ENCODE measurements at regions of chr22 and their contacts with region 1.

Region 1: GRCh38 chr22:40128989-40129388 is 48.7 kb upstream of the TNRC6B start:
- DNase-seq: peak in 1 of 2 donors; percentile 30
- ATAC-seq: peak in 7 of 8 donors; percentile 20 to 88 (median 65)
- H3K4me3 ChIP-seq: no peak overlapping the region
- H3K27ac ChIP-seq: no peak overlapping the region
- H3K4me1 ChIP-seq: peaks cover 0 to 16% (median 4%) of the 10 kb centered on the region in 9 donors
- H3K27me3 ChIP-seq: no peaks in the 10 kb centered on the region
- CTCF ChIP-seq: no peak

Region 2: DNA sequence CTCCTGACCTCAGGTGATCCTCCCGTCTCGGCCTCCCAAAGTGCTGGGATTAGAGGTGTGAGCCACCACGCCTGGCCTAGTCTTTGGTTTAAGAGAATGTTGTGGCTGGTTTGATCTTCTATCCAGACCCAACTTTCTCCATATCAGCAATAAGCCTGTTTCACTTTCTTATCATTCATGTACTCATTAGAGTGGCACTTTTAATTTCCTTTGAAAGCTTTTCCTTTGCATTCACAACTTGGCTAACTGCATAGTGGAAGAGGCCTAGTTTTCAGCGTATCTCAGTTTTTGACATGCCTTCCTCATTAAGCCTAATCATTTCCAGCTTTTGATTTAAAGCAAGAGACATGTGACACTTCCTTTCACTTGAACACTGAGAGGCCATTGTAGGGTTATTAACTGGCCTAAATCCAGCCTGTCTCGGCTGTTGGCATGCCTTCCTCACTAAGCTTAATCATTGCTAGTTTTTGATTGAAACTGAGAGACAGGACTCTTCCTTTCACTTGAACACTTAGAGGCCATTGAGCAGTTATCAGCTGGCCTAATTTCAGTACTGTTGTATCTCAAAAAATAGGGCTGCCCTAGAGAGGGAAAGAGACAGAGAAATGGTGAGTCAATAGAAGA is 796.4 kb before region 1 on chr22:
- intact Hi-C with region 1: loop called in 1 of 10 experiments (anchors 5 kb)
- DNase-seq: no peak
- ATAC-seq: peak in 4 of 8 donors; percentile 31 to 56 (median 38)
- H3K4me3 ChIP-seq: no peak overlapping the region
- H3K27ac ChIP-seq: peak overlapping the region in 4 of 10 donors; percentile 7 to 64 (median 34)
- H3K4me1 ChIP-seq: peaks cover 0 to 31% (median 6%) of the 10 kb centered on the region in 9 donors
- H3K27me3 ChIP-seq: no peaks in the 10 kb centered on the region
- CTCF ChIP-seq: no peak

Region 3: DNA sequence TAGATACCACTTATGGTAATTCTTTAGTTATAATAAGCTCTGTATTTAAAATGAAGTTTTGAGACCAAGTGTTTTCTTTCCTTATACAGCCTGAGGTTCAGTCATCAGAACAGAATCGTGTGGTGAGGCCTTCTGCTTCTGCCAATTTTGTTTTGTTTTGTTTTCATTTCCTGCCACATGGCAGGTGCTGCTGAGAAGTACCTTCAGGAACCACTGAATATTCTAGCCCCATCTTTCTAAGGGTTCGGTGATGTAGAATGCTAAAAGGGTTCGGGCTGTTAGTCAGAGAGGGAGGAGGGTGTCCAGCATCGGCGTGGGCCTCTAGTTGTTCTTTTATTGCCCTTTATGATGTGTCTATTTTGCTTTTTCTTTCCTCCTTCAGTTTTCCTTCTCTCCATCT is 74.6 kb after region 1 on chr22:
- intact Hi-C with region 1: no loop called
- DNase-seq: no peak
- ATAC-seq: peak in 2 of 8 donors; percentile 6 to 12
- H3K4me3 ChIP-seq: no peak overlapping the region
- H3K27ac ChIP-seq: peak overlapping the region in 6 of 10 donors; percentile 27 to 75 (median 36)
- H3K4me1 ChIP-seq: peaks cover 0 to 88% (median 70%) of the 10 kb centered on the region in 9 donors
- H3K27me3 ChIP-seq: no peaks in the 10 kb centered on the region
- CTCF ChIP-seq: no peak

Region 4: GRCh38 chr22:40276996-40277823 is 148.2 kb after region 1 on chr22:
- intact Hi-C with region 1: no loop called
- DNase-seq: peak in 1 of 2 donors; percentile 38
- ATAC-seq: peak; percentile 34 to 81 (median 62)
- H3K4me3 ChIP-seq: peak overlapping the region in 9 of 10 donors; percentile 4 to 48 (median 45)
- H3K27ac ChIP-seq: peak overlapping the region; percentile 56 to 88 (median 80)
- H3K4me1 ChIP-seq: peaks cover 0 to 52% (median 24%) of the 10 kb centered on the region in 9 donors
- H3K27me3 ChIP-seq: no peaks in the 10 kb centered on the region
- CTCF ChIP-seq: no peak

Region 5: DNA sequence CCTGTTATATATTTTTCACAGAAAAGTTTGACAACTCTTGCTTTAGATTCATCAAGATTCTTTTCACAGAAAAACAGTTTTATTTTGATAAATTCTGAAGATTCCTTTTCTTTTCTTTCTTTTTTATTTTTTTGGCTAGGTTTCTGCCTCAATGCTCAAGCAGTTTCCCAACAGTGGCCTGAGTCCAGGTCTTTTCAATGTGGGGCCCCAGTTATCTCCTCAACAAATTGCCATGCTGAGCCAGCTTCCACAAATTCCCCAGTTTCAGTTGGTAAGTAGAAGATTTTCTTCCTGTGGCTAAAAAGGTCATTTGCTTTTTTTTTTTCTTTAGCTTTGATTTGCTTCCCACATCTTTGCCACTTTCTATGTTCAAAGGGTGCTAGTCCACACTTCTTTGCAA is 171.3 kb after region 1 on chr22:
- intact Hi-C with region 1: no loop called
- DNase-seq: no peak
- ATAC-seq: no peak
- H3K4me3 ChIP-seq: no peak overlapping the region
- H3K27ac ChIP-seq: no peak overlapping the region
- H3K4me1 ChIP-seq: peaks cover 0 to 10% (median 0%) of the 10 kb centered on the region in 9 donors
- H3K27me3 ChIP-seq: no peaks in the 10 kb centered on the region
- CTCF ChIP-seq: no peak